GM18951 (cell line): ENCODE measurements at regions of chr7 and their contacts with region 1.

Region 1: DNA sequence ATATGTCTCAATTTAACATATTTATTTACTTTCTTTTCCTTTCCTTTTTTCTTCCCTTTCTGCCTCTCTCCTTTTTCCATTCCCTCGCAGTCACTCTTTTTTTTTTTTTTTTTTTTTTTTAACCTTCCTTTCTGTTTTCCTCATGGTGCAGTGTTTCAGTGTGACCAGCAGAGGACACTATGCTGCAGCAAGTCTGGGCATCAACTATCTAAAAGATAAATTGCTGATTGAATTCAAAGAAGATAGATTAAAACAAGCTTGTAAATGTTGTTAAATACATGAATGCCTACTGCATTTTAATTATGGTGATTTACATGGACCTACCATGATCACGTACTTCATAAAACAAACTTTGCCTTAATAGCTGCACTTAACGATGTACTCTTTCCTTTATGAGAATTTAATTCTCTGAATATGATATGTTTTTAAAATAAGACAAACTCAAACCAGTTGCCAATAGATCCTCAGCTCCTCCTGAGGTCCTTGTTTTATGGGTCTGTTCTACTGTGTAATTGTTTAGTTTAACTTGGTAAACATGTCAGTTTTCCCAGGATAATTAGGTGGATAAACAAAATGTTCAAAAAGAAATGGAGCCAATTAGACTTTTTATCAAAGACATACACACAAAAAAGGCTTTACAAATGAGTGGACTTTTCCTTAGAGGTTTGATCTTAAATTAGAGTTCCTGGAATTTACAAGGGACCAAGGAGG is 101.0 kb upstream of the AGR3 start:
- POLR2A ChIP-seq: no peak

Region 2: DNA sequence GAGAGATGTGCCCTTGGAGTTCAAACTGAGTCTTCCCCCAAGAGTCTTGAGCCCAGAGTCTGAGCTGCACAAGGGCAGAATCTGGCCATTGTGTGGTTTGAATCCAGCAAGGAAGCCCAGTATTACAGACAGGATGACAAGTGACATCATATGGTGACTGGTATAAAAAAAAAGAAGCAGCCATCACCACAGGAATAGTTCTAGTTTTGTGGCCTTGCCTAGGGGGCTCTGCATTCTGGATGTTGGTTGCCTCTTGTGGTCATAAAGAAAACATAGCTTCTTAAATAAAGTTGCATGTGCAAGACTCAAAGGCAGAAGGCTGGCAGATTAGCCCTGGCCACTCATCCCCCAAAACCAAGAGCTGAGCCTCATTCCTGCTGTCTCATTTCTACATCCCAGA is 473.0 kb before region 1 on chr7:
- in situ Hi-C with region 1: no loop called
- POLR2A ChIP-seq: no peak

Region 3: DNA sequence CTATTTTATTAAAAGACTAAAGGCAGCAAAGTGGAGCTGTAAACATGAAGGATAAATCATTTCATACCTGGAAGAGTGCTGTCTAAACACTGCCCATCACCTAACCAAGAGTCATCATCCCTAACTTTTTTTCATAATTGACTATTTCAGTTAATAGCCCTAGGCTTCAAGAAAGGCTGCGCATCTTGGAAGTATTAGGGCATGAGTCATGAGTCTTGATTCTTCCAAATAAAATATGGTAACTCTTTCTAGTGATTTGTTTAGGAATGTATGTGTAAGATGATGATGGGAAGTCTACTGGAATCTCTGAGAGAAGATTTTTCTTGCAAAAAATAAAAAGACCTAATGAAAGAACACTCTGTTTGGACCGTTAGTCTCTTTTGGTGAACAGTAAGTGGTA is 108.0 kb after region 1 on chr7:
- in situ Hi-C with region 1: no loop called
- POLR2A ChIP-seq: no peak

Region 4: DNA sequence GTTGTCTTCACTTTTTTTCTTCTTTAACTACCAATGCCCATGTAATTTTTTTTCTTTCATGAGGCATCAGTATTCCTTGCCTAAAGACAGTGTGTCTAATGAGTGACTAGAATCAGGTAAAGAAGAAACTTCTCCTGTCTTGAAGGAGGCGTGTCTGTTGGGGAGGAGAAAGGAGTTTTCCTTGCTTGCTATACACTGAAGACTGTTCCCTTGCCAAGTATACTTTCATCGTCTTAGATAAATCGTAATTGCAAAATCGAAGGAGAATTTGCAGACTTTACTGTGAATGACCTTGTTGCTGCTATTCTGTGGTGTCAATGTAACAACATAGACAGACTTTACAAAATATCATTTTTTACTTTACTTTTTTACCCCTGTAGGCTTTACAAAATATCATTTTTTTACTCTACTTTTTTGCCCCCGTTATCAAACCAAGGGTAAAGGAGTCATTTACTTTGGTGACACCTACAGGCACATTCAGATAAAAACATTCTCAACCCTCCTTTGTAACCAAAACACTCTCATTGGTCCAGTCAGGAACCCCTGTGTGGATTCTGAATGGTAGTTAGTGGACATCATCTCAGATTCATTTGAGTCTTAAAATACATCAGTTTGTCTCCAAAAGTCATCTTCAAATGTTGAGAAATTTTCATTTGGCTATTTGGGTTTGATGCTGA is 548.1 kb after region 1 on chr7:
- in situ Hi-C with region 1: loop called (anchors 25 kb)
- POLR2A ChIP-seq: no peak

Region 5: GRCh38 chr7:17640730-17641377 is 658.1 kb after region 1 on chr7:
- in situ Hi-C with region 1: loop called (anchors 25 kb)
- POLR2A ChIP-seq: no peak